ENCODE measurements at regions of chr14 and their contacts with region 1.

Region 1: GRCh38 chr14:24160850-24161804 is at the start of gene IRF9:
- DNase-seq: peak; percentile 84 to 94
- ATAC-seq: peak; percentile 96 to 97
- H3K4me3 ChIP-seq: peak within 1 kb of the TSS; percentile 63 to 70 (median 66)
- H3K27ac ChIP-seq: peak within 1 kb of the TSS; percentile 85 to 90 (median 89)
- H3K4me1 ChIP-seq: peaks cover 23 to 30% of the 10 kb centered on the region in 2 donors
- H3K27me3 ChIP-seq: no peaks in the 10 kb centered on the region
- CTCF ChIP-seq: peak; percentile 90 to 95 (median 94)
- POLR2A ChIP-seq: peak; percentile 14 to 49
- total RNA-seq, gene IRF9: 6.5 to 36.7 (median 11.9) TPM

Region 2: DNA sequence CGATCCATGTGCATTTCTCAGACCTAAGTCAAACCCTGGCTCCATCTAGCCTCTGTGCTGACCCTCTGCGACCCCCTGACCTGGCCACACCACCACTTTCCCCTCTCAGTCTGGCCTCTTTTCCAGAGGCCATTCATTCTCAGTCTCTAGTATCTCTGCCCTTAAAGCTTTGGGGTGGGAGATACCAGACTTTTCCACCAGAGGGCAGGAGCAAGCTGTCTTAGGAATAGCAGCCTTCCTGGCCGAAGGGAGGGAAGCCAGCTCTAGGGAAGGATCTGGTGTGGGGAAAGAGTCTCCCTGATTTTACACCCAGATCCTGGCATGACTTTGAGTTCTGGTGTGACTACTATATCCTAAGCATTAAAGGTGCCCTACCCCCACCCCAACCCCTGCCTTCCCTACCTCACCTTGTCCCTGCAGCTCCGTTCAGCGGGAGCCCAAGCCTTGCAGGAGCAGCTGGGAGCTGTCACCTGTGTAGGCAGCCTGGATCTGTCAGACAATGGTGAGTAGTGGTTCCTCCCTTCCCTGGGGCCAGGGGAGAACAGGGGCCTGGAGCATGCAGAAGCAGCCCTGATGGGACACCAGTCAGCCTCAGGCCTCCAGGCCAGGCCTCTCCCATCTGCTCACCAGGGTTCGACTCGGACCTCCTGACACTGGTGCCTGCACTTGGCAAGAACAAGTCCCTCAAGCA is 102.7 kb before region 1 on chr14:
- in situ Hi-C with region 1: loop called in 1 of 4 experiments (anchors 5 kb)
- intact Hi-C with region 1: loop called (anchors 2 kb)
- DNase-seq: peak; percentile 58 to 60
- ATAC-seq: peak; percentile 93 to 96
- H3K4me3 ChIP-seq: no peak overlapping the region
- H3K27ac ChIP-seq: no peak overlapping the region
- H3K4me1 ChIP-seq: no peaks in the 10 kb centered on the region
- H3K27me3 ChIP-seq: peaks cover 0 to 3% (median 0%) of the 10 kb centered on the region in 3 donors
- CTCF ChIP-seq: peak; percentile 74 to 95 (median 88)
- POLR2A ChIP-seq: no peak

Region 3: GRCh38 chr14:24093901-24094761 is 67.0 kb before region 1 on chr14 and contains the start of gene PCK2:
- in situ Hi-C with region 1: no loop called
- intact Hi-C with region 1: loop called (anchors 2 kb)
- DNase-seq: peak; percentile 88 to 93
- ATAC-seq: peak; percentile 88 to 90
- H3K4me3 ChIP-seq: peak within 1 kb of the TSS; percentile 75 to 97 (median 90)
- H3K27ac ChIP-seq: peak within 1 kb of the TSS; percentile 83 to 88 (median 88)
- H3K4me1 ChIP-seq: peaks cover 10 to 14% of the 10 kb centered on the region in 2 donors
- H3K27me3 ChIP-seq: no peaks in the 10 kb centered on the region
- CTCF ChIP-seq: peak in 1 of 5 experiments; percentile 16
- POLR2A ChIP-seq: peak; percentile 53
- total RNA-seq, gene PCK2: 1.9 to 9.8 (median 3.6) TPM

Region 4: GRCh38 chr14:24114536-24115450 is 46.3 kb before region 1 on chr14 and contains the starts of genes DCAF11 and NRL:
- in situ Hi-C with region 1: no loop called
- intact Hi-C with region 1: loop called (anchors 2 kb)
- DNase-seq: peak; percentile 99
- ATAC-seq: peak; percentile 87 to 89
- H3K4me3 ChIP-seq: peak within 1 kb of the TSS; percentile 74 to 93 (median 78)
- H3K27ac ChIP-seq: peak within 1 kb of the TSS; percentile 92 to 99 (median 98)
- H3K4me1 ChIP-seq: peaks cover 16 to 19% of the 10 kb centered on the region in 2 donors
- H3K27me3 ChIP-seq: no peaks in the 10 kb centered on the region
- CTCF ChIP-seq: peak in 1 of 5 experiments; percentile 32
- POLR2A ChIP-seq: peak in 1 of 2 donors; percentile 28
- total RNA-seq, gene DCAF11: 52.4 to 113 (median 88.7) TPM
- total RNA-seq, gene NRL: 0.82 to 4.5 (median 2.4) TPM

Region 5: DNA sequence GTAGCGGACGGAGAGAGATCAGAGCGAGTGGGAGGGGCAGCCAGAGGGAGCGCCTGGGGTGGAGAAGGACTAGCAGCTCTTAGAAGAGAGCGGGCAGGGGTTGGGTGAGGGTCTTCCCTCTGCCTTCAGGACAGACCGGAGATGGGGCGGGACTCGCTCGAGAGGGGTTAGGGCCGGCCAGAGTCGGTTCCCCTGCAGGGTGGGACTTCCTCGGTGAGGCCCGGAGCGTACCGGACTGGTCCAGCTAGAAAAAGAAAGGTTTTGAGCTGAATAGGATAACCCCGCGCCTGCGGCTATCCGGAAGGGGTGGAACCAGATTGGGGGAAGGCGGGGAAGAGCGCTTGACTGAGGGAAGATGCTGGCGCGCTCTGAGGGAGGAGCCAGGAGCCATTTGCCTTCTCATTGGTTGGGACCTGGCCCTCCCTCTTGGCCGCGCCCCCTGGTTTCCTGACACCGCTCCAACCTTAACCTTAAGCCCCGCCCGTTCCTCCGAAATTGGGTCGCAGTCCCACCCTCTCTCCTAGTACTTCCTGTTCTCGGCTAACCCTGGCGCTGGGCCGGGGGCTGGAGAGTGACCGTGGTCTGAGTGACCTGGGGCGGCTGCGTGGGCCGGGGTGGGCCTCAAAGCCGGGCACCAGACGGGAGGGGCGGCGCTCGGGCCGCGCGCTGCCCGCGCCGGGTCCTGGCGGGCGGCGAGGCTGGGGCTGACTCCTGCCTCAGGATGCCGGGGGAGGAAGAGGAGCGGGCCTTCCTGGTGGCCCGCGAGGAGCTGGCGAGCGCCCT is 14.0 kb before region 1 on chr14 and contains the start of gene RNF31:
- in situ Hi-C with region 1: no loop called
- intact Hi-C with region 1: loop called (anchors 1 kb)
- DNase-seq: peak; percentile 98 to 99
- ATAC-seq: peak; percentile 89 to 94
- H3K4me3 ChIP-seq: peak within 1 kb of the TSS; percentile 75 to 92 (median 84)
- H3K27ac ChIP-seq: peak within 1 kb of the TSS; percentile 92 to 97 (median 92)
- H3K4me1 ChIP-seq: peaks cover 21% of the 10 kb centered on the region in 2 donors
- H3K27me3 ChIP-seq: no peaks in the 10 kb centered on the region
- CTCF ChIP-seq: no peak
- POLR2A ChIP-seq: peak; percentile 72 to 82
- total RNA-seq, gene RNF31: 63.3 to 140 (median 82.4) TPM

Region 6: GRCh38 chr14:24188251-24189058 is 27.3 kb after region 1 on chr14 and contains the start of gene IPO4:
- in situ Hi-C with region 1: no loop called
- intact Hi-C with region 1: loop called (anchors 1 kb)
- DNase-seq: peak; percentile 96 to 97
- ATAC-seq: peak; percentile 99
- H3K4me3 ChIP-seq: peak within 1 kb of the TSS; percentile 62 to 84 (median 82)
- H3K27ac ChIP-seq: peak within 1 kb of the TSS; percentile 83 to 90 (median 86)
- H3K4me1 ChIP-seq: peaks cover 12 to 16% of the 10 kb centered on the region in 2 donors
- H3K27me3 ChIP-seq: no peaks in the 10 kb centered on the region
- CTCF ChIP-seq: no peak
- POLR2A ChIP-seq: peak; percentile 86
- total RNA-seq, gene IPO4: 35.7 to 73.2 (median 55.4) TPM

Region 7: DNA sequence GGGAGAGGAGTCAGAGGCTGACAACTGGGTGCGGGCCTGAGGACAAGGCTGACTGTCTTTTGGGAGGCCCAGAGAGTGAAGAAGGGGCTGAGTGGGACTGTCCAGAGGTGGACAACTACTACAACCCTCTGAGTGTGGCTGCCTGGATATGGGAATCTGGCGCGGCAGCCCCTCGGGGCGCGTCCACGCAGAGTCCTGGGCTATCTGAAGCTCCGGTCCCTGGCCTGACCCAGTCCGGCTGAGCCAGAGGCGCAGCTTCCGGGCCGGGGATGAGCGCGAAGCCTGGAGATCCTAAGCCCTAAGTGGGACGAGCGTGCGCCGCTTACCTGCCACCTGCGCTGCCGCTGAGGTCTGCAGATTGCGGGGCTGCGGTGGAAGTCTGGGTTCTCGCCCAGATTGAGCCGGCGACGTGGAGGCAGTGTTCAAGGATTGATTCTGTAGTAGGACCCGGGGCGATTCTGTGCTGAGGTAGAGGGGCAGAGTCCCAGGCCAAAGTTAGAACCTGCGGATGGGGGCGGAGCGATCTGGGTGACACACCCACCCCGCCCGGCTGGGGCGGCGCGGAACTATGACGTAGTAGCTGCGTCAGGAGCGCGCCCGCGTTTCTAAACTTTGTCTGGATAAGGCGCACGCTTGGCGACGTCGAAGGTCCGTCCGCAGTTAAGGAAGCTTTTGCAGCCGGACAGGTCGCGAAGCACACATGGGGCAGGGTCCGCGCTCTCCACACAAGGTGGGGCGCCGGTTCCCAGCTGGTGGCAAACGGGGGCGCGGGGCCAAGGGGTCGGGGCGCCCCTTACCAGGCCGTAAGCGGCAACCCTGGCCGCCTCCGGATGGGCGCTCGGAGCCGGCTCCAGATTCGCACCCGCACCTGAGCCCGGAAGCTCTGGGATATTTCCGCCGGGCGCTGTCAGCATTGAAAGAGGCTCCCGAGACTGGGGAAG is 138.4 kb after region 1 on chr14 and contains the starts of genes DHRS1 and NOP9:
- in situ Hi-C with region 1: no loop called
- intact Hi-C with region 1: loop called (anchors 10 kb)
- DNase-seq: peak; percentile 68 to 85
- ATAC-seq: peak; percentile 90 to 95
- H3K4me3 ChIP-seq: peak within 1 kb of the TSS; percentile 82 to 97 (median 88)
- H3K27ac ChIP-seq: peak within 1 kb of the TSS; percentile 75 to 89 (median 88)
- H3K4me1 ChIP-seq: peaks cover 13 to 20% of the 10 kb centered on the region in 2 donors
- H3K27me3 ChIP-seq: no peaks in the 10 kb centered on the region
- CTCF ChIP-seq: peak in 1 of 5 experiments; percentile 3
- POLR2A ChIP-seq: peak; percentile 26 to 59
- total RNA-seq, gene DHRS1: 1.9 to 12.2 (median 8.2) TPM
- total RNA-seq, gene NOP9: 27.2 to 43.5 (median 32.2) TPM

Measured in gastrocnemius medialis (tissue), 4 donors.